Naive thymus-derived CD4-positive, alpha-beta T cell (primary cell): ENCODE measurements at regions of chr10 and their contacts with region 1.

Region 1: GRCh38 chr10:86436963-86437362 is 70.4 kb upstream of the GRID1 start:
- DNase-seq: no peak
- ATAC-seq: no peak
- H3K4me3 ChIP-seq: no peak overlapping the region
- H3K4me3 Mint-ChIP-seq: no peak overlapping the region
- H3K27ac ChIP-seq: no peak overlapping the region
- H3K27ac Mint-ChIP-seq: peak overlapping the region in 1 of 9 donors; percentile 15
- H3K4me1 ChIP-seq: no peaks in the 10 kb centered on the region
- H3K4me1 Mint-ChIP-seq: peaks cover 11 to 25% (median 23%) of the 10 kb centered on the region in 7 donors
- H3K27me3 ChIP-seq: no peaks in the 10 kb centered on the region
- H3K27me3 Mint-ChIP-seq: no peaks in the 10 kb centered on the region

Region 2: GRCh38 chr10:86312701-86313516 is 124.1 kb before region 1 on chr10:
- CTCF ChIA-PET with region 1: no interaction called
- POLR2A ChIA-PET with region 1: no interaction called
- intact Hi-C with region 1: no loop called
- DNase-seq: no peak
- ATAC-seq: no peak
- H3K4me3 ChIP-seq: no peak overlapping the region
- H3K4me3 Mint-ChIP-seq: no peak overlapping the region
- H3K27ac ChIP-seq: no peak overlapping the region
- H3K27ac Mint-ChIP-seq: peak overlapping the region in 1 of 9 donors; percentile 49
- H3K4me1 ChIP-seq: no peaks in the 10 kb centered on the region
- H3K4me1 Mint-ChIP-seq: no peaks in the 10 kb centered on the region
- H3K27me3 ChIP-seq: no peaks in the 10 kb centered on the region
- H3K27me3 Mint-ChIP-seq: peaks cover 0 to 24% (median 17%) of the 10 kb centered on the region in 5 donors

Region 3: GRCh38 chr10:86411281-86411841 is 25.6 kb before region 1 on chr10:
- CTCF ChIA-PET with region 1: no interaction called
- POLR2A ChIA-PET with region 1: interaction called, 7 read pairs
- intact Hi-C with region 1: loop called in 1 of 2 experiments (anchors 2 kb)
- DNase-seq: peak in 7 of 9 donors; percentile 22 to 38 (median 36)
- ATAC-seq: peak; percentile 70
- H3K4me3 ChIP-seq: peak overlapping the region; percentile 8
- H3K4me3 Mint-ChIP-seq: peak overlapping the region; percentile 62 to 83 (median 77)
- H3K27ac ChIP-seq: peak overlapping the region; percentile 42
- H3K27ac Mint-ChIP-seq: peak overlapping the region; percentile 84 to 94 (median 88)
- H3K4me1 ChIP-seq: peaks cover 20 to 48% of the 10 kb centered on the region in 2 donors
- H3K4me1 Mint-ChIP-seq: peaks cover 24 to 72% (median 57%) of the 10 kb centered on the region in 7 donors
- H3K27me3 ChIP-seq: no peaks in the 10 kb centered on the region
- H3K27me3 Mint-ChIP-seq: peaks cover 0 to 3% (median 0%) of the 10 kb centered on the region in 5 donors

Region 4: DNA sequence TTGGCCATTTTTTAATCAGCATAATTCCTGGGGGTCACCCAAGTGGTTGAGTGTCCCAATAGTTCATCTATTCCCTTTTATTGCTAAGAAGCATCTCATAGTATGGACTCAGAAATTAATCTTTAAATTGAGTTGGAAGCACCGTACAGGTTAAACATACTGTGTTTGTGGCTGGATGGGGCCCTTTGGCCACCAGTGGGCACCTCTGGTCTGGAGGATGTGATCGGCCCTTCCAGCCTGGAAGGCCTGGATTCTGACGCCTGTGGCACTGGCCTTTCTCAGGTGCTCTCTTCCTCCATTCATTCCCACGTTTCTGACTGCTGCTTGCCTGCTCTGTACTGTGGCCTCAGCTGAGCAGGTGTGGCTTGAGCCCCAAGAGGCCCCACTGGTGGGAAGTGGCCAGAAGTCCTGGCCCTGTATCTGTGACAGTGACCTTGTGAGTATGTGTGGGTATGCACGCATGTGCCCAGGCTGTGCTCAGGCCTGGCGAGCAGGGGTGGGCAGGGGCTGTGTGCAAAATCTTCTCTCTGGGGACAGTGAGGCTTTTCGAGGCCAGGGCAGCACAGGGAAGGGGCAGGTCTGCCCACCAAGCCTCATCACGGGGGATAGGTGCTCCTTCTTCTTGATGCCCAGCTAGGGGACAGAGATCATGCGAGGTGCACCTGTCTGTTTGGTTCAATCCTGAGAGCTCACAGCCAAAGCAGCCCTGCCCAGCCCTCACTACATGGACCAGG is 261.4 kb after region 1 on chr10:
- CTCF ChIA-PET with region 1: no interaction called
- POLR2A ChIA-PET with region 1: no interaction called
- intact Hi-C with region 1: no loop called
- DNase-seq: no peak
- ATAC-seq: no peak
- H3K4me3 ChIP-seq: no peak overlapping the region
- H3K4me3 Mint-ChIP-seq: no peak overlapping the region
- H3K27ac ChIP-seq: no peak overlapping the region
- H3K27ac Mint-ChIP-seq: no peak overlapping the region
- H3K4me1 ChIP-seq: no peaks in the 10 kb centered on the region
- H3K4me1 Mint-ChIP-seq: peaks cover 0 to 6% (median 0%) of the 10 kb centered on the region in 7 donors
- H3K27me3 ChIP-seq: no peaks in the 10 kb centered on the region
- H3K27me3 Mint-ChIP-seq: peaks cover 0 to 4% (median 0%) of the 10 kb centered on the region in 5 donors